Caco-2 (cell line): ENCODE measurements at regions of chr3 and their contacts with region 1.

Region 1: GRCh38 chr3:39990532-39990931 is 181.1 kb downstream of the MYRIP start:
- DNase-seq: peak; percentile 41 to 59
- H3K4me3 ChIP-seq: no peak overlapping the region
- H3K4me3 Mint-ChIP-seq: no peak overlapping the region
- H3K27ac Mint-ChIP-seq: no peak overlapping the region
- H3K4me1 ChIP-seq: no peaks in the 10 kb centered on the region
- H3K4me1 Mint-ChIP-seq: peaks cover 7% of the 10 kb centered on the region
- H3K27me3 ChIP-seq: no peaks in the 10 kb centered on the region
- H3K27me3 Mint-ChIP-seq: no peaks in the 10 kb centered on the region
- CTCF ChIP-seq: peak; percentile 49 to 57

Region 2: DNA sequence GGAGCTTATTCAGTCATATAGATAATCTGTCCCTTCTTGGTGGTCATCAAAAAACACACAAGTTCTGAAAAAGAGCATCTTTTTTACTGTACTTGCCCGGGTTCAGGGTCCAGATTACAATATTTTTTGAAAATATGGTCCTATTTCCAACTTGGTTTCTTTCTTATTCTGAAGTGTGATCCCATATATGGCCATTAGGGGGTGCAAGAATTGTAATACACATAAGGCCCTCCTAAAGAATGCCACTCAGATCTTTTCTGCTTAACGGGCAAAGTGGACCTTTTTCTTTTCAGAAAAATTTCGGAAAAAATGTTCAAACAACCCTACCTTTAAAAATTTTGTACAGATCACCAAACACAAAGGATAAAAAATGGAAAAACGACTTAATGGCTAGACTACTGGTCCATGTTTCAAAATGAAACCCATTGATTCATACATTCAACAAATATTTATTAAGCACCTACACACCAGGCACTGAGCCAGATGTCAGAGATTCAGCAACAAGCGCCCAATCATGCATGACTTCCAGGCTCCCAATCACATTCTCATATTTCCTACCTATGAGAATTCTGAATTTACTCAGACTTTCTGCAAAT is 283.1 kb before region 1 on chr3:
- CTCF ChIA-PET with region 1: no interaction called
- POLR2A ChIA-PET with region 1: no interaction called
- intact Hi-C with region 1: loop called (anchors 1 kb)
- DNase-seq: peak in 1 of 2 experiments; percentile 42
- H3K4me3 ChIP-seq: no peak overlapping the region
- H3K4me3 Mint-ChIP-seq: no peak overlapping the region
- H3K27ac Mint-ChIP-seq: no peak overlapping the region
- H3K4me1 ChIP-seq: no peaks in the 10 kb centered on the region
- H3K4me1 Mint-ChIP-seq: no peaks in the 10 kb centered on the region
- H3K27me3 ChIP-seq: no peaks in the 10 kb centered on the region
- H3K27me3 Mint-ChIP-seq: peaks cover 10% of the 10 kb centered on the region
- CTCF ChIP-seq: peak; percentile 57 to 64

Region 3: DNA sequence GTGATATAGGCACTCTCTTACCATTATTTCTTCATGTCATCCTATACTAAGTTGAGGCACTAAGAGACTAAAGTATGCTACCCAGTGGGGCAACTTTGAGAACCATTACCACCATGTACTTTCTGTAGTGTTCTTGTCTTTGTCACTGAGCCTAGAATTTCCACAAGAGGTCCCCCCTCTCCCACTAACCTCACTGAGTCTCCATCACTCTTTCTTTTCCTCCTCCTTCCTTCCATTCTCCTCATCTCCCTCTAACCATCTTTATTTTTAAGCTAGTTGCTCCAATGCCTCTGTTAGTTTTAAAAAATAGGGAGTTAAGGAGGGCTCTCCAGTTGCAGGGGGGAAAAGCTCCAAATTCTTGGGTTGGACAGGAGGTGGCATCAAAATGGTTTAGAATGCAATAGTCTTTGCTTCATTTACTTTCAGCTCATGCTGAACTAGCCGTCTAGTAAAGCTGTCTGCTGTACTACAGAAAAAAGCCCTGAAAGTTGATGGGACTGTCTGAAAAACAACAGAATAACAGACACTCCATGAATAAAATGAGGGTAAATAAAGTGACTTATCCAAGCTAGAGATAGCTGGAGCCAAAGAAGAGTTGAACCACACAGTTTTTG is 266.2 kb before region 1 on chr3:
- CTCF ChIA-PET with region 1: no interaction called
- POLR2A ChIA-PET with region 1: no interaction called
- intact Hi-C with region 1: loop called (anchors 5 kb)
- DNase-seq: no peak
- H3K4me3 ChIP-seq: no peak overlapping the region
- H3K4me3 Mint-ChIP-seq: no peak overlapping the region
- H3K27ac Mint-ChIP-seq: no peak overlapping the region
- H3K4me1 ChIP-seq: no peaks in the 10 kb centered on the region; the same call in 1 of the 2 replicates
- H3K4me1 Mint-ChIP-seq: peaks cover 7% of the 10 kb centered on the region
- H3K27me3 ChIP-seq: no peaks in the 10 kb centered on the region
- H3K27me3 Mint-ChIP-seq: no peaks in the 10 kb centered on the region
- CTCF ChIP-seq: peak; percentile 18 to 24

Region 4: GRCh38 chr3:40143283-40144090 is 153.0 kb after region 1 on chr3:
- CTCF ChIA-PET with region 1: no interaction called
- POLR2A ChIA-PET with region 1: no interaction called
- intact Hi-C with region 1: no loop called
- DNase-seq: no peak
- H3K4me3 ChIP-seq: no peak overlapping the region
- H3K4me3 Mint-ChIP-seq: no peak overlapping the region
- H3K27ac Mint-ChIP-seq: no peak overlapping the region
- H3K4me1 ChIP-seq: no peaks in the 10 kb centered on the region
- H3K4me1 Mint-ChIP-seq: no peaks in the 10 kb centered on the region
- H3K27me3 ChIP-seq: no peaks in the 10 kb centered on the region
- H3K27me3 Mint-ChIP-seq: peaks cover 17% of the 10 kb centered on the region
- CTCF ChIP-seq: no peak